H1 (cell line): ENCODE measurements at regions of chr5 and their contacts with region 1.

Region 1: DNA sequence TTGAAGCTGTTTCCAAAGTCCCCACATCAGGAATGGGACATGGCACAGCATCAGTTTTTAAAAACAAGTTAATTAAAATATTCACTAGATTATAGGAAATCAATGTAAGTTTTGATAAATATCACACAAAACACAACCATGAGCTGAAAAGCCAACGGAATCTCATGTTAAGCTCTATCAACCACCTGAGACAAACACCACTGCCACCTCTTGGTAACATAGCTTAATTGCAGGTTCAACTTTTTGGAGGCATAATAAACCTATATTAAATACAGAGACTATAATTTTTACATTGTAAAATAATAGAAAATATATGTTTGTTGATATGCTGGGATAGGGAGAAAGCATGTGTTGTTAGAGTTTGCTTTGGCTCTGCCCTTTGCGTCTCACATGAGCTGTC is 126.1 kb downstream of the SV2C start:
- DNase-seq: no peak
- H3K4me3 ChIP-seq: no peak overlapping the region
- H3K27ac ChIP-seq: no peak overlapping the region
- H3K4me1 ChIP-seq: no peaks in the 10 kb centered on the region
- H3K27me3 ChIP-seq: no peaks in the 10 kb centered on the region
- CTCF ChIP-seq: peak in 2 of 3 experiments; percentile 24 to 37; a peak in 1 of 4 replicates
- EP300 ChIP-seq: no peak
- POLR2A ChIP-seq: no peak
- RAD21 ChIP-seq: peak; percentile 56 to 59

Region 2: GRCh38 chr5:76074487-76075065 is 134.7 kb before region 1 on chr5:
- CTCF ChIA-PET with region 1: interaction called, 11 read pairs
- POLR2A ChIA-PET with region 1: no interaction called
- DNase-seq: no peak
- H3K4me3 ChIP-seq: no peak overlapping the region
- H3K27ac ChIP-seq: no peak overlapping the region
- H3K4me1 ChIP-seq: no peaks in the 10 kb centered on the region
- H3K27me3 ChIP-seq: peaks cover 0 to 12% (median 3%) of the 10 kb centered on the region in 4 experiments; a peak in 5 of 7 replicates
- CTCF ChIP-seq: peak; percentile 42 to 88 (median 88)
- EP300 ChIP-seq: no peak
- POLR2A ChIP-seq: no peak
- RAD21 ChIP-seq: peak; percentile 93 to 95

Region 3: GRCh38 chr5:76165711-76166374 is 43.5 kb before region 1 on chr5:
- CTCF ChIA-PET with region 1: interaction called, 10 read pairs
- POLR2A ChIA-PET with region 1: no interaction called
- DNase-seq: no peak
- H3K4me3 ChIP-seq: no peak overlapping the region
- H3K27ac ChIP-seq: no peak overlapping the region
- H3K4me1 ChIP-seq: no peaks in the 10 kb centered on the region
- H3K27me3 ChIP-seq: no peaks in the 10 kb centered on the region
- CTCF ChIP-seq: no peak
- EP300 ChIP-seq: no peak
- POLR2A ChIP-seq: no peak
- RAD21 ChIP-seq: no peak

Region 4: DNA sequence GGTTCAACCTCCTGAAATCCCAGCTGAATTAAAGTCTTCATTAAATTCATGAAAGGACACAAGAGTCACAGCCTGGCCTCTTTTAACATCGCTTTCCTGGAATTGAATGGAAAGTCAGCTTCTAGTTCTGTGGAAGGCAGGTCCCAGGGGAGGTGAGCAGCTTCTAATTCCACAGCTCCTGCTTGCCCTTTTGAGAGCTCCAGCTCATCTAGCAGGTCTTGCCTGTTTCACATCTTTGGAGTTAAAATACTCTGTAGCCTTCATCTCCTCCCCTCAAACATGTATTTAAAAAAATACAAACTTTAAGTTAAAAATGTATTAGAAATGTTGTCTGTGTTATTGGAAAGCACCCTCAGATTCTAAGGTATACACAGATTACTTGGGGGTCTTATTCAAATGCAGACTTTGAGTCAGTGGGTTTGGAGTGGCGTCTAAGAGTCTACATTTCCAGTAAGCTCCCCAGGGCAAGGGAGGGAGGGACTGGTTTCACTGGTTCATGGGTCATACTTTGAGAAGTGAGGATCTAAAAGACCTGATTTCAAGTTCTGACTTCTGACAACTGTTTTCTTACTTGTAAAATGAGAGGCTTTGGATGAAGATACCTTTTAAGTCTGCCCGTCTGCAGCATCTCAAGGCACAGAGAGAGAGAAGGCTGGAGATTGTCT is 17.3 kb before region 1 on chr5:
- CTCF ChIA-PET with region 1: interaction called, 54 read pairs
- POLR2A ChIA-PET with region 1: no interaction called
- DNase-seq: no peak
- H3K4me3 ChIP-seq: no peak overlapping the region
- H3K27ac ChIP-seq: no peak overlapping the region
- H3K4me1 ChIP-seq: peaks cover 0 to 16% (median 6%) of the 10 kb centered on the region in 4 experiments; a peak in 3 of 7 replicates
- H3K27me3 ChIP-seq: no peaks in the 10 kb centered on the region
- CTCF ChIP-seq: no peak
- EP300 ChIP-seq: no peak
- POLR2A ChIP-seq: no peak
- RAD21 ChIP-seq: no peak

Region 5: DNA sequence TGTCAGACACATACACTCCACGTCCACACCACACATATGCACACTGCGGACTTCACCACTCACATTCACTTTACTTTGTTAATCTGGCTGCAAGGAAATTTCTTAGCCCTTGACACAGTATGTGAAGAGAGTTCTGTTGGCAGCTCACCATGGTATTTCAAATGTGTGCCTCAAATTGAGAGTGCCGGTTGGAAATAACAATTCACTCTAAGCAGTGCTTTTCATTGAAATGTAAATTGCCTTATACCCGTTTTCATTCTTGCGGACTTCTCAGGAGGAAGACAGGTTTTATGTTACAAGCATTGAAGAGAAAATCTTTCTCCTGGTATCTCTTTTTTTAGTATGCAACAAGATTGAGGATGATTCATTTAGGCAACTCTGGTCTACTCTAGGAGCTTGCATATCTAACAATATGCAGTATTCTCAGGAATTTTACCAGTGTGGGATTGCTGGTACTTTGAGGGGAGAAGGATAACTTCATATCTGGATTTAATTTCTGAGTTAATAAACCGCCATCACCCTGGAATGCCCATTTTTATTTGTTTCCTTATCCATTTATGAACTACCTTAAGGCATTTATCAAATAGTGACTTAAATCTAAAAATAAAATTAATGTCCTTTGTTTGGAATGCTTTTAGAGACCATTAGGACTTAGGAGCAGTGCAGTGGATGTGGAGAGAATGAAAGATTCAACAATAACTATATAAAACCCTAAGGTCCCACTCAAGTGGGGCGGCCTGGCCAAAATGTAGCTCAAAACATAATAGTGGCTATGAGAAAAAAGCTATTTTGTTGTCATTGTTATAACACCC is 280.8 kb after region 1 on chr5:
- CTCF ChIA-PET with region 1: no interaction called
- POLR2A ChIA-PET with region 1: no interaction called
- DNase-seq: no peak
- H3K4me3 ChIP-seq: peak overlapping the region in 1 of 4 experiments; percentile 41; a peak in 2 of 8 replicates
- H3K27ac ChIP-seq: peak overlapping the region; percentile 73
- H3K4me1 ChIP-seq: peaks cover 8 to 39% (median 36%) of the 10 kb centered on the region in 4 experiments
- H3K27me3 ChIP-seq: no peaks in the 10 kb centered on the region
- CTCF ChIP-seq: no peak
- EP300 ChIP-seq: no peak
- POLR2A ChIP-seq: no peak
- RAD21 ChIP-seq: no peak